ENCODE measurements at regions of chr5 and their contacts with region 1.

Region 1: DNA sequence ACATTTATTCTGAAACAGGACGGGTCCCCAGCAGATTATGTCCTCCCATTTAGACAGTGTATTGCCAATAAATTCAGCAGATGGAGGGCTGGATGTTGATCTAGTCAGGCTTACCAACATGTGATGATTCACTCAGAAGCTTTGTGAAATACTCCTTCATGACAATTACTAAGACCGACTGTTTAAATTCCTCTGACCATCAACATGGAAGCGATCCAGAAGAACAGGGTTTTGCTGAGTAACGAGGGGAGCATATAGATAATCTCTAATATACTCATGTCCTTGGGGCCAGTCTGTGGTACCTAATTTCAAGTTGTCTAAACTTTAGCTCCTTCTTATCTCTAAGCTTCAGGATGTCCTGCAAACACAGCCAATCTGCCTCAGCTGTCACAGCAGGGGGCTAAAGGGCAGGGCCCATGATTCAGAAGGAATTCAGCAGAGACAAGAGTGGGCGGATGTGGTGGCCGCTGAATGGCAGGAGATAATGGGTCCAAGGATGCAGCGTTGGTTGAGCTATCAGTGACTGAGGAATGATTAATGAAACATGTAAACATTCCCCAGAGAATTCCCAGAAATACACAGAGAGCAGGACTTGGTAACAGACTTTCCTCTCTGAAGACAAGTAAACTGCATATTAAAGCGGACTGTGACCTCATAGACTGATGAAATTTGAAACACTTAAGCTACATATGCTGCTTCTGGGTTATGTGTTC is 109.4 kb downstream of the ANKRD55 start:
- DNase-seq: peak; percentile 94 to 98
- H3K4me3 ChIP-seq: no peak overlapping the region
- H3K4me3 Mint-ChIP-seq: peak overlapping the region; percentile 65
- H3K27ac Mint-ChIP-seq: peak overlapping the region; percentile 99
- H3K4me1 ChIP-seq: peaks cover 46% of the 10 kb centered on the region
- H3K4me1 Mint-ChIP-seq: peaks cover 32% of the 10 kb centered on the region
- H3K27me3 ChIP-seq: no peaks in the 10 kb centered on the region
- H3K27me3 Mint-ChIP-seq: no peaks in the 10 kb centered on the region
- CTCF ChIP-seq: no peak

Region 2: DNA sequence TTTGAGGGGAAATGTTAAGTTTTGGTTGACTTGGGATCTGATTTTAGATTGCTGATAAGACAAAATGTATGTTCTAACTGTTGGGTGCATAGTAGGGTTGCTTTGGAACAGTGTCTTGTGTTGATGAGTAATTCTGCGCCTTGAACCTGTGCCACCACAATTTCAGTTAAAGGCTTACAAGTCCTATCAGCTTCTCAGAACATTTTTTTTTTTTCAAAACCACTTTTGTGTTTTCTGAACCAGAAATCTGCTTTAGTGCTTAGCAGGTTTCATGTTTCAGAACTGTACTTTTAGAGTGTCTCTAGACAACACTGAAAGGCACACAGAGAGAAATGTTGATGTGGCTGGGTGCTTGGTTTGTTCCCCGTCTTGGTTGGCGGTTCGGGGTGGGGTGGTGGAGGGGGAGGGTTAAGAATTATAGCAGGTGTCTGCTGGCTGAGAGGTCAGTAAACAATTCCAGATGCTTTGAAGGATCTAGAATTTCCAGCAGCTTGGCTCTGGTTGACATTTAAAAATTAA is 24.8 kb after region 1 on chr5:
- CTCF ChIA-PET with region 1: interaction called, 13 read pairs
- POLR2A ChIA-PET with region 1: interaction called, 8 read pairs
- intact Hi-C with region 1: loop called (anchors 1 kb)
- DNase-seq: no peak
- H3K4me3 ChIP-seq: no peak overlapping the region
- H3K4me3 Mint-ChIP-seq: no peak overlapping the region
- H3K27ac Mint-ChIP-seq: peak overlapping the region; percentile 32
- H3K4me1 ChIP-seq: peaks cover 55% of the 10 kb centered on the region
- H3K4me1 Mint-ChIP-seq: peaks cover 38% of the 10 kb centered on the region
- H3K27me3 ChIP-seq: no peaks in the 10 kb centered on the region
- H3K27me3 Mint-ChIP-seq: no peaks in the 10 kb centered on the region
- CTCF ChIP-seq: no peak

Region 3: DNA sequence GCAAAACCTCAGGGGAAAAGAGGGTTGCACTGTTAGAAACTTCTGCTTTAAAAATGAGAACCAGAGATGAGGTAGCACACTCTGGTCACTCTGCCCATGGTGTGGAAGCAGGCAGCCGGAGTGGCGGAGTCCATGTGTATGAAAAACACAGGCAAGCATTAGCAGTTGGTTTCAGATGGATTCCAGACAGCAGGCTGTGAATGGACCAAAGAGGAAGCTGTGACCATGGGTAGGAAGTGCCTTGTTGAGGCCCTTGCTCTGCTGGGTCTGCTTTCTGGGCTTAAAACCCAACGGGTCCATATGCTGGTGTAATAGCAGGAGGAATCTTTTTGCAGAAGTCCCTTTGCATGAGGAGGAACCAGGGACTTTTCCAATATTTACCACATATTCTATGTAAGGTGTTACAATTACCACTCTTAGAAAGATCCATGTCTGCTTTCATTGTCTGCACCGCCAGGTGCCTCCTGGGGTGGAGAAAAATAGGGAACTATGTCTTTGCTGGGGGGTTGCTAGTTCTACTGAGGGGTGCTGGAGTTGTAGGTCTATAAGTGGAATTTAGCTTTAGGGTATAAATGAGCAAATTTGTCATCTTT is 32.4 kb after region 1 on chr5:
- CTCF ChIA-PET with region 1: no interaction called
- POLR2A ChIA-PET with region 1: no interaction called
- intact Hi-C with region 1: loop called (anchors 1 kb)
- DNase-seq: no peak
- H3K4me3 ChIP-seq: no peak overlapping the region
- H3K4me3 Mint-ChIP-seq: no peak overlapping the region
- H3K27ac Mint-ChIP-seq: peak overlapping the region; percentile 90
- H3K4me1 ChIP-seq: peaks cover 69% of the 10 kb centered on the region
- H3K4me1 Mint-ChIP-seq: peaks cover 36% of the 10 kb centered on the region
- H3K27me3 ChIP-seq: no peaks in the 10 kb centered on the region
- H3K27me3 Mint-ChIP-seq: no peaks in the 10 kb centered on the region
- CTCF ChIP-seq: no peak

Measured in Caco-2 (cell line).